PC-9 (cell line): ENCODE measurements at regions of chr3 and their contacts with region 1.

Region 1: DNA sequence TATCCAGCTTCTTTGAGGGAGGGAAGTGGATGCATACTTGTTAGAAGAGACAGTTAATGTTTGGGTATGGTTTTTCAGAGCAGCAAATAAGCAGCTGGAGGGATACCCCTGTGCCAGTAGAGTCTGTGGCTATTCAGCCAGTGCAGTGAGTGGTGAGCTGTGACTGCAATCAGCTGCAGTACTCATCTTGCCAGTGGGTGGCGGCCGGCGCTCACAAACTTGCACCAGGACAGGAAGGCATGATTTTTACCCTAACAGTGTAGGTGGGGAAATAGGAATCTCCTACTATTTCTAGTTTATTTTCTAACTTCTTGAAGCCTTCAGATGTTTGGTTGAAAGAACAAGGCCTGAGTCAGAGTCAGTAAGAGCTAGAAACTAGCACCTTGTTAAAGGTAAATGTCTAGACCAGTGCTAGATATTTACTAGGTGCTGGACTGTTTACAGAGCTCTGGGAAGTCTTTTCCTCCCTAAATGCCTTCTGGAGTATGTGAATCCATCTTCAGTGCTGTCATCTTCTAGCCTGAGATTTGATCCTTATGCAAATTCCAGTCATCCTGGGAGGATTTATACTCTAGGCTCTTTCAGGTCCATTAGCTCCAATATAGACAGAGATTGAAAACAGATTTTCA is 23.6 kb downstream of the TIMP4 start:
- DNase-seq: peak; percentile 54 to 72
- H3K4me3 ChIP-seq: no peak overlapping the region
- H3K27ac ChIP-seq: no peak overlapping the region
- H3K4me1 ChIP-seq: peaks cover 14% of the 10 kb centered on the region
- H3K27me3 ChIP-seq: no peaks in the 10 kb centered on the region
- CTCF ChIP-seq: peak; percentile 96

Region 2: DNA sequence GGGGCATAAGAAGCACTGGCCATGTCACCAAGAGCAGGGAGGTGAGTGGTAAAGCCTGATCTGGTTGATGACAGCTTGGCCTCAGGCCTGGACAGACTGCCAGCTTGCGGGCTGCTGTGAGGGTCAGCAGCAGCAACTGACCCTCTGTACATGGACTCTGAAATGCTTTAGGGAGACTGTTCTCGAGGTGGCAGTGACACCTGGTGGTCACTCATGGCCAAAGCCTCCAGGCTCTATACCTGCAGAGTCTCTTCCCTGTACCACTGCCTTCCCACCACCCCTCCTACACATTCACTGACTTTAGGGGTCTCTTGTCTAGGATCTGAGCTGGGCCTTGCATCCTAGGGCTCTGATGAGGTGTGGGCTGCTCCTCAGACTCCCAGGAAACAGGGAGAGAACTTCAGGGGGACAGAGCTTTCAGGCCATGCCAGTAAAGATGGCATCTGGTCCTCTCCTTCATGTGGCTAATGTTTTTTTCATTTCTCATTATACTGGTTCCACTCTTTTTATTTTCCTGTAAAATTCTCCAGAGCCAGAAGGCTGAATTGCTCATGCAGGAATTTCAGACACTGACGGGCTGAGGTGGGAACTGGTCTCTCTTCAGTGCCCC is 40.8 kb after region 1 on chr3:
- CTCF ChIA-PET with region 1: interaction called, 7 read pairs
- POLR2A ChIA-PET with region 1: no interaction called
- intact Hi-C with region 1: loop called (anchors 1 kb)
- DNase-seq: peak in 1 of 2 experiments; percentile 47
- H3K4me3 ChIP-seq: no peak overlapping the region
- H3K27ac ChIP-seq: no peak overlapping the region
- H3K4me1 ChIP-seq: peaks cover 34% of the 10 kb centered on the region
- H3K27me3 ChIP-seq: no peaks in the 10 kb centered on the region
- CTCF ChIP-seq: peak; percentile 90

Region 3: DNA sequence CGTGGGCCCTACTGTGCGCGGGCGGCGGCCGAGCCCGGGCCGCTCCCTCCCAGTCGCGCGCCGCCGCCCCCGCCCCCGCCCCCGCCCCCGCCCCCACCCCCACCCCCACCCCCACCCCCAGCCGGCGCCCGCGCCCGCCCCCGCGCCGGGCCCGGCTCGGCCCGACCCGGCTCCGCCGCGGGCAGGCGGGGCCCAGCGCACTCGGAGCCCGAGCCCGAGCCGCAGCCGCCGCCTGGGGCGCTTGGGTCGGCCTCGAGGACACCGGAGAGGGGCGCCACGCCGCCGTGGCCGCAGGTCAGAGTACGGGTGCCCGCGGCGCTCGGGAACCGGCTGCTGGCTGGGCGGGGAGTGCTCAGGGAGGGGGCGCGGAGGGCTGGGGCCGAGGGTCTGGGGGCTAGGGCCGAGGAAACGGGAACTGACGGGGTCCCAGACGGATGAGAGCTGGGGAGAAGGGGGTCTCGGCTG is 152.6 kb after region 1 on chr3:
- CTCF ChIA-PET with region 1: interaction called, 6 read pairs
- POLR2A ChIA-PET with region 1: interaction called, 4 read pairs
- intact Hi-C with region 1: loop called (anchors 1 kb)
- DNase-seq: peak in 1 of 2 experiments; percentile 54
- H3K4me3 ChIP-seq: peak overlapping the region; percentile 85
- H3K27ac ChIP-seq: peak overlapping the region; percentile 91
- H3K4me1 ChIP-seq: peaks cover 26% of the 10 kb centered on the region
- H3K27me3 ChIP-seq: no peaks in the 10 kb centered on the region
- CTCF ChIP-seq: no peak

Region 4: GRCh38 chr3:12484198-12484974 is 349.2 kb after region 1 on chr3 and contains the start of gene TSEN2:
- CTCF ChIA-PET with region 1: interaction called, 10 read pairs
- POLR2A ChIA-PET with region 1: interaction called, 3 read pairs
- intact Hi-C with region 1: loop called (anchors 1 kb)
- DNase-seq: peak; percentile 79 to 96
- H3K4me3 ChIP-seq: peak within 1 kb of the TSS; percentile 78
- H3K27ac ChIP-seq: peak within 1 kb of the TSS; percentile 52
- H3K4me1 ChIP-seq: peaks cover 33% of the 10 kb centered on the region
- H3K27me3 ChIP-seq: no peaks in the 10 kb centered on the region
- CTCF ChIP-seq: no peak
- total RNA-seq, gene TSEN2: 22.1 and 26.8 TPM in 2 replicates

Region 5: GRCh38 chr3:12556671-12557472 is 421.7 kb after region 1 on chr3 and contains the start of gene MKRN2:
- CTCF ChIA-PET with region 1: no interaction called
- POLR2A ChIA-PET with region 1: no interaction called
- intact Hi-C with region 1: loop called (anchors 1 kb)
- DNase-seq: peak; percentile 70 to 92
- H3K4me3 ChIP-seq: peak within 1 kb of the TSS; percentile 74
- H3K27ac ChIP-seq: peak within 1 kb of the TSS; percentile 80
- H3K4me1 ChIP-seq: peaks cover 21% of the 10 kb centered on the region
- H3K27me3 ChIP-seq: no peaks in the 10 kb centered on the region
- CTCF ChIP-seq: no peak
- total RNA-seq, gene MKRN2: 25.0 and 30.9 TPM in 2 replicates

Region 6: DNA sequence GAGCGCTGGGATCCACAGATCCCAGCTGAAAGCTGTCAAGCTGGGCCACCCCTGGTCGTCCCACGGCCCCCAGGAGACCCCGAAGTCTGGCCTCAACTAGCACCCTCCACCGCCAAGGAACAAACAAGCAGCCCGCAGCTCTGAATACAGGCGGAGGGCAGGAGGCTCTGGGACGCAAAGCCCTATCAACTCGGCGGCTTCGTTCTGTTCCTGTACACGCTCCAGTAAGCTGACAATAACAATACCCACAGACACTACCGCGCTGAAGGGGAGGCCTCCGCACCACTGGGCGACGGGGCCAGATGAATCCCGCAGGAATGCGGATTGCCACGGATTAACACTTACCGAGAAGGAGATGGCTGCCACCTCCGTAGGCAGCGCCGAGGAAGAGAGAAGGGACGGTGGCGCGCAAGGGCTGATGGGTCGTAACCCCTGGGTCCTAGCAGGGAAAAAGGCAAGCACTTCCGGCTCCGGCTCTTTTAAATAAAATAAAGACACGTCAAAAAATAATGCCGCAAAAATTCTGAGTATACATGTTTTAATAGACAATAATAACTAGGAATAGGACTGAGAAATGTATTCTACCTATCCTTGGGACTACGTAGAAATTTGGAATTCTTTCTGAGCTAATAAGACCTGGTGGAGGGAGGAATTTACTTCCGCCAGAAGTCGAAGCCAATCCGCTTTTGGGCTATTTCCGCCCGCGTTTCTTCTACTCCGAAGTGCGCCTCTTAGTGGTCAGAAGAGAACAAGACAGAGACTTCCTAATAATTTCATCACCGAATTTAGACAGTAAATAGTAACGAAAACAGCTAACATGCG is 706.2 kb after region 1 on chr3 and contains the start of gene RPL32:
- CTCF ChIA-PET with region 1: no interaction called
- POLR2A ChIA-PET with region 1: no interaction called
- intact Hi-C with region 1: loop called (anchors 5 kb)
- DNase-seq: peak; percentile 77 to 85
- H3K4me3 ChIP-seq: peak within 1 kb of the TSS; percentile 98
- H3K27ac ChIP-seq: peak within 1 kb of the TSS; percentile 93
- H3K4me1 ChIP-seq: peaks cover 33% of the 10 kb centered on the region
- H3K27me3 ChIP-seq: no peaks in the 10 kb centered on the region
- CTCF ChIP-seq: peak; percentile 89
- total RNA-seq, gene RPL32: 1,195 and 1,662 TPM in 2 replicates